Activated naive CD4-positive, alpha-beta T cell treated with anti-CD3 and anti-CD28 coated beads for 36 hours (primary cell): ENCODE measurements at regions of chr14 and their contacts with region 1.

Region 1: GRCh38 chr14:50085570-50086320 is 30.6 kb downstream of the VCPKMT start:
- DNase-seq: peak; percentile 77
- H3K4me3 Mint-ChIP-seq: peak overlapping the region; percentile 6
- H3K27ac Mint-ChIP-seq: peak overlapping the region; percentile 83
- H3K4me1 Mint-ChIP-seq: peaks cover 93% of the 10 kb centered on the region
- H3K27me3 Mint-ChIP-seq: no peaks in the 10 kb centered on the region

Region 2: DNA sequence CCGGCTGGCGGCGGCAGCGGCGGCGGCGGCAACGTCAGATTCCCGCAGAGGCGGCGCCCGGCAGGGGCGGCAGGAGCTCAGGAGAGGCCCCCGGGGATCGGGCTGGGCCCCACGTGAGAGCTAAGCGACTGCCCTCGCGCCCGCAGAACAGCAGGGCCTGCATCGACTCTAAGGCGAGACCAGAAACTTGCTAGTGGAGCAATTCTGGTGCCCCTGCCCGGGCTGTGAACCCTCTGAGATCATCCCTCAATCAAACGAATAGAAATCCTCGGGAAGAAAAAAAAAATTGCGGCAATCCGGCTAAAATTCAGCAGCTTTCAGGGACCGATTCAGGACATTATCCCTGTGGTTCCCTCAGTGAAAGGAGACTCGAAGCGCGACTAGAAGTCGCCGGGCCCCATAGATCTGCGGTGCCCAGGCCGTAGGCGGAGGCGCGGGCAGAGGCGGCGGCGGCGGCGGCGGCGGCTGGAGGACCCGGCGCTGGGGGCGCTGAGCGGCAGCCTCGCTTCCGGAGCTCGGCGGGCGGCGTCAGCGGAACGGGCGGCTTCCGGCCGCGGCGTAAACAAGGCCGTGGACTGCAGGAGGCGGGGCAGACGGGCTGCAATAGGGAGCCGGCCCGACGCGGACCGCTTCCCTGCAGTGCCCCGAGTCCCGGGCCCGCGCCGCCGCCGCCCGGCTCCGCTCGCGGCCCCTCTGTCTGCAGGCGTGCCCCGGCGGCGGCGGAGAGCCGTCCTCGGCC is 318.0 kb before region 1 on chr14 and contains the start of gene KLHDC2:
- CTCF ChIA-PET with region 1: no interaction called
- intact Hi-C with region 1: loop called (anchors 10 kb)
- DNase-seq: peak; percentile 91
- H3K4me3 Mint-ChIP-seq: peak within 1 kb of the TSS; percentile 94
- H3K27ac Mint-ChIP-seq: peak within 1 kb of the TSS; percentile 99
- H3K4me1 Mint-ChIP-seq: peaks cover 34% of the 10 kb centered on the region
- H3K27me3 Mint-ChIP-seq: no peaks in the 10 kb centered on the region
- total RNA-seq, gene KLHDC2: 24.3 to 25.0 TPM

Region 3: GRCh38 chr14:49879683-49880204 is 206.0 kb before region 1 on chr14:
- CTCF ChIA-PET with region 1: interaction called, 3 read pairs
- intact Hi-C with region 1: loop called (anchors 1 kb)
- DNase-seq: peak; percentile 79
- H3K4me3 Mint-ChIP-seq: no peak overlapping the region
- H3K27ac Mint-ChIP-seq: peak overlapping the region; percentile 30
- H3K4me1 Mint-ChIP-seq: peaks cover 17% of the 10 kb centered on the region
- H3K27me3 Mint-ChIP-seq: no peaks in the 10 kb centered on the region

Region 4: GRCh38 chr14:49971156-49972130 is 114.3 kb before region 1 on chr14:
- CTCF ChIA-PET with region 1: interaction called, 3 read pairs
- intact Hi-C with region 1: loop called (anchors 1 kb)
- DNase-seq: peak; percentile 69
- H3K4me3 Mint-ChIP-seq: peak overlapping the region; percentile 73
- H3K27ac Mint-ChIP-seq: peak overlapping the region; percentile 97
- H3K4me1 Mint-ChIP-seq: peaks cover 59% of the 10 kb centered on the region
- H3K27me3 Mint-ChIP-seq: no peaks in the 10 kb centered on the region

Region 5: GRCh38 chr14:50067723-50068495 is 17.8 kb before region 1 on chr14:
- CTCF ChIA-PET with region 1: interaction called, 34 read pairs
- intact Hi-C with region 1: loop called (anchors 1 kb)
- DNase-seq: no peak
- H3K4me3 Mint-ChIP-seq: no peak overlapping the region
- H3K27ac Mint-ChIP-seq: no peak overlapping the region
- H3K4me1 Mint-ChIP-seq: peaks cover 65% of the 10 kb centered on the region
- H3K27me3 Mint-ChIP-seq: no peaks in the 10 kb centered on the region

Region 6: DNA sequence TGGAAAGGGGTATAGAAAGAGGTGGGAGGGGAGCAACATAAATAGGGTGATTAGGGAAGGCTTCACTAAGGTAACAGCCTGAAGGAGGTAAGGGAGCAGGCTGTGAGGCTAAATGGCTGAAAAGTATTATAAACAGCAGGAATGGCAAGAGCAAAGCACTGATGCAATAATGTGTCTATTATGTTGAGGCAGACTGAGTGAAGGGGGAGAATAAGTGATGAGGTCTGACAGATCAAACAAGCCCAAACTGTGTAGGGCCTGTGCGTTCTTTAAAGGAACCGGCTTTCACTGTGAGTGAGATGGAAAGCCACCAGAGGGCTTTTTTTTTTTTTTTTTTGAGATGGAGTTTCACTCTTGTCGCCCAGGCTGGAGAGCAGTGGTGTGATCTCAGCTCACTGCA is 37.3 kb after region 1 on chr14:
- CTCF ChIA-PET with region 1: no interaction called
- intact Hi-C with region 1: no loop called
- DNase-seq: no peak
- H3K4me3 Mint-ChIP-seq: no peak overlapping the region
- H3K27ac Mint-ChIP-seq: peak overlapping the region; percentile 42
- H3K4me1 Mint-ChIP-seq: no peaks in the 10 kb centered on the region
- H3K27me3 Mint-ChIP-seq: no peaks in the 10 kb centered on the region

Region 7: GRCh38 chr14:50139192-50139591 is 53.4 kb after region 1 on chr14:
- CTCF ChIA-PET with region 1: no interaction called
- intact Hi-C with region 1: no loop called
- DNase-seq: no peak
- H3K4me3 Mint-ChIP-seq: no peak overlapping the region
- H3K27ac Mint-ChIP-seq: no peak overlapping the region
- H3K4me1 Mint-ChIP-seq: no peaks in the 10 kb centered on the region
- H3K27me3 Mint-ChIP-seq: no peaks in the 10 kb centered on the region

Region 8: GRCh38 chr14:50798048-50798421 is 712.3 kb after region 1 on chr14:
- CTCF ChIA-PET with region 1: no interaction called
- intact Hi-C with region 1: no loop called
- DNase-seq: no peak
- H3K4me3 Mint-ChIP-seq: no peak overlapping the region
- H3K27ac Mint-ChIP-seq: no peak overlapping the region
- H3K4me1 Mint-ChIP-seq: peaks cover 45% of the 10 kb centered on the region
- H3K27me3 Mint-ChIP-seq: no peaks in the 10 kb centered on the region

Region 9: GRCh38 chr14:51860164-51860824 is 1774.5 kb after region 1 on chr14 and contains the start of gene GNG2:
- CTCF ChIA-PET with region 1: no interaction called
- intact Hi-C with region 1: loop called (anchors 10 kb)
- DNase-seq: peak; percentile 91
- H3K4me3 Mint-ChIP-seq: peak within 1 kb of the TSS; percentile 96
- H3K27ac Mint-ChIP-seq: peak within 1 kb of the TSS; percentile 94
- H3K4me1 Mint-ChIP-seq: peaks cover 51% of the 10 kb centered on the region
- H3K27me3 Mint-ChIP-seq: no peaks in the 10 kb centered on the region
- total RNA-seq, gene GNG2: 176 to 181 TPM